IMR-90 (cell line): ENCODE measurements at regions of chr5 and their contacts with region 1.

Region 1: GRCh38 chr5:164475339-164475977 is 970.0 kb downstream of the MAT2B start:
- DNase-seq: peak; percentile 56
- ATAC-seq: no peak
- H3K4me3 ChIP-seq: no peak overlapping the region
- H3K27ac ChIP-seq: no peak overlapping the region
- H3K4me1 ChIP-seq: no peaks in the 10 kb centered on the region
- H3K27me3 ChIP-seq: no peaks in the 10 kb centered on the region
- CTCF ChIP-seq: peak; percentile 63
- POLR2A ChIP-seq: no peak
- RAD21 ChIP-seq: peak; percentile 84

Region 2: GRCh38 chr5:163913548-163913947 is 561.9 kb before region 1 on chr5:
- CTCF ChIA-PET with region 1: interaction called, 10 read pairs
- POLR2A ChIA-PET with region 1: no interaction called
- dilution Hi-C with region 1: no loop called
- in situ Hi-C with region 1: no loop called
- intact Hi-C with region 1: no loop called
- DNase-seq: peak; percentile 14
- ATAC-seq: no peak
- H3K4me3 ChIP-seq: no peak overlapping the region
- H3K27ac ChIP-seq: no peak overlapping the region
- H3K4me1 ChIP-seq: peaks cover 8% of the 10 kb centered on the region
- H3K27me3 ChIP-seq: no peaks in the 10 kb centered on the region
- CTCF ChIP-seq: no peak
- POLR2A ChIP-seq: no peak
- RAD21 ChIP-seq: no peak